Transverse colon (tissue), 4 donors: ENCODE measurements at regions of chr1 and their contacts with region 1.

Region 1: GRCh38 chr1:29230553-29231378 is at the start of gene MECR:
- DNase-seq: peak; percentile 95
- H3K4me3 ChIP-seq: peak within 1 kb of the TSS; percentile 63 to 89 (median 82)
- H3K27ac ChIP-seq: peak within 1 kb of the TSS; percentile 63 to 88 (median 80)
- H3K4me1 ChIP-seq: peaks cover 4 to 17% (median 13%) of the 10 kb centered on the region in 4 donors
- H3K27me3 ChIP-seq: peaks cover 7% of the 10 kb centered on the region
- CTCF ChIP-seq: peak in 3 of 5 experiments; percentile 5 to 44 (median 7)
- EP300 ChIP-seq: no peak
- POLR2A ChIP-seq: peak; percentile 75
- total RNA-seq, gene MECR: 5.2 to 16.0 (median 12.2) TPM in 3 of 4 donors, not detected in the other

Region 2: DNA sequence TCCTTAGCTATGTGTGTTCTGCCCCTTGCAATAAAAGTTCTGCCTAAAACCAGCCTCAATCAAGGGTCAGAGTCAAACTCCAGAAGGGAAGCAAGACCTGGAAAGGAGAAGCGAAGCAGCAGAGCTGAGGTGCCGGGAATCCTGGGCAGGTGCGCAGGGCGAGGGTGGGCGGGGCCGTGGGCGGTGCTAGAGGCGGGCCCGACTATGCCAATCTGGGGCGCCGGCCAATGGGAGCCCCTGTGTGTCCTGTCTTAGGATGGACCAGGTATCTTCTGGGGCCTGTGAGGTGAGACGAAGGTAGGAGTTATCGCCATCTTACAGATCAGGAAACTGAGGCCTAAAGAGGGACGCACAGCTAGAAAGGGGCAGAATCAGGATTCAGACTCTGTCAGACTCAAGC is 125.9 kb after region 1 on chr1:
- in situ Hi-C with region 1: no loop called
- intact Hi-C with region 1: no loop called
- DNase-seq: peak; percentile 21
- H3K4me3 ChIP-seq: no peak overlapping the region
- H3K27ac ChIP-seq: no peak overlapping the region
- H3K4me1 ChIP-seq: no peaks in the 10 kb centered on the region
- H3K27me3 ChIP-seq: peaks cover 18% of the 10 kb centered on the region
- CTCF ChIP-seq: no peak
- EP300 ChIP-seq: no peak
- POLR2A ChIP-seq: no peak

Region 3: DNA sequence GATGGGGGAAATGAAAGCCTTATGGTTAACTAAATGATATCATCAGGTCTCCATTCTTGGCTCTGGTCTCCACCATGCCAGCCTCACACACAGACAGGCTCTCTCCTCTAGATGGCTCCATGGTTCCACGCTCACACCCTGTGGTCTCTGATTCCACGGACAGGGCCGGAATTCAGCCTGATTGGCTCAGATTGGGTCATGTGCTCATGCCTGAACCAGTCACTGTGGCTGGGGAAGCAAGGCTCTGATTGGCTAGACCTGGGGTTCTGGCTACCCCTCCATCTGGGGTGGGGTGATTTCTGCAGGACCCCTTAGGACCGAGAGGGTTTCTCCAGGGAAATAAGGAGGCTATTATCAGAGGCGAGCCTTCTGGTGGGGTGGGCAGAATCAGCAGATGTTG is 282.6 kb after region 1 on chr1:
- in situ Hi-C with region 1: no loop called
- intact Hi-C with region 1: no loop called
- DNase-seq: no peak
- H3K4me3 ChIP-seq: no peak overlapping the region
- H3K27ac ChIP-seq: no peak overlapping the region
- H3K4me1 ChIP-seq: no peaks in the 10 kb centered on the region
- H3K27me3 ChIP-seq: peaks cover 14% of the 10 kb centered on the region
- CTCF ChIP-seq: peak in 1 of 5 experiments; percentile 8
- EP300 ChIP-seq: no peak
- POLR2A ChIP-seq: no peak

Region 4: DNA sequence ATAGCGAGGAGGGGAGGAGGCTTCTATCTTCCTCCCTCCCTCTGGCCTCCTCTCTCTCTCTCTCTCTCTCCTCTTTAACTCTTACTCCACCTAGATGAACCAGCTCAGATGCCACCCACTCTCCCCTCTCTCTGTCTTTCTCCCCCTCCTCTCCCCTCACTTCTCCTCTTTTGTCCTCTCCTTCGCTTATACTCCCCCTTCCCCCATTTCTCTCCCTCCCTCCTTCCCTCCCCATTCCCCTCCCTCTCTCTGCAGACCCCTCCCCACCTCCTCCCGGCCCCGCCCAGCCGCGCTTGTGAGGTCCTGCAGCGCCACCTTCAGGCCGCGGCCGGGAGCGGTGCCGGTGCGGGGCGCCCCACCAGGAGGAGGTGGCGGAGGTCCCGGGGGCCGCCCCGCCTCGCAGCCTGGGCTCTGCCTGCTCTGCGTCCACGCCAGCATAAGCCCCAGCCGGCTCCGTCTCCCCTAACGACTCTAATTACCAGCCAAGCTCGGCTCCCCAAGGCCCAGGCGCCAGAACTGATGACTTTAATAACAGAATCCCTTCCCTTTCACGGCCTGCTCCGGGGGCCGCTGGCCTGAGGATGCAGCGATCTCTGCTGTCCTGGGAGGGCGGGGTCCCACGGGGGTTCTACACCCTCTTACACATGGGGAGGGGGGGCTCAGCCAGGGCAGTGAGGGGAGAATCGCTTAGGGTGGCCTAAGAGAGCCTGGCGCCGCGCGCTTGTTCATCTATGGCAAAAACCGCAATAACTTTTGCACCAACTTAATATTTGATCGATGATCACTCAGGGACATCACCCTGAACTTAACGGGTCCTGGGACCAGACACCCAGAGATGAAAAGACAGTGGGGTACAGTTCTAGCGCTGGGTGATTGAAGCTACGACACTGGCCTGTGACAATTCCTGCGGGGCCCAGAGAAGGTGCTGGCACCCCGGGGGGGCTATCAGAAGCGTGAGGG is 855.3 kb after region 1 on chr1:
- in situ Hi-C with region 1: loop called in 3 of 4 experiments (anchors 25 kb)
- intact Hi-C with region 1: no loop called
- DNase-seq: peak; percentile 41
- H3K4me3 ChIP-seq: no peak overlapping the region
- H3K27ac ChIP-seq: no peak overlapping the region
- H3K4me1 ChIP-seq: peaks cover 11 to 41% (median 19%) of the 10 kb centered on the region in 4 donors
- H3K27me3 ChIP-seq: no peaks in the 10 kb centered on the region
- CTCF ChIP-seq: peak; percentile 59 to 78 (median 73)
- EP300 ChIP-seq: no peak
- POLR2A ChIP-seq: no peak

Region 5: GRCh38 chr1:30684881-30685795 is 1454.4 kb after region 1 on chr1:
- in situ Hi-C with region 1: loop called in 1 of 4 experiments (anchors 25 kb)
- intact Hi-C with region 1: no loop called
- DNase-seq: peak; percentile 78
- H3K4me3 ChIP-seq: peak overlapping the region in 2 of 4 donors; percentile 12 to 17
- H3K27ac ChIP-seq: peak overlapping the region in 1 of 4 donors; percentile 35
- H3K4me1 ChIP-seq: peaks cover 4 to 8% (median 6%) of the 10 kb centered on the region in 4 donors
- H3K27me3 ChIP-seq: peaks cover 48% of the 10 kb centered on the region
- CTCF ChIP-seq: peak in 1 of 5 experiments; percentile 6
- EP300 ChIP-seq: no peak
- POLR2A ChIP-seq: no peak

Region 6: GRCh38 chr1:30718636-30719405 is 1488.1 kb after region 1 on chr1:
- in situ Hi-C with region 1: loop called in 3 of 4 experiments (anchors 10 to 25 kb)
- intact Hi-C with region 1: no loop called
- DNase-seq: peak; percentile 85
- H3K4me3 ChIP-seq: peak overlapping the region; percentile 25 to 57 (median 44)
- H3K27ac ChIP-seq: peak overlapping the region; percentile 94 to 99 (median 98)
- H3K4me1 ChIP-seq: peaks cover 5 to 15% (median 10%) of the 10 kb centered on the region in 4 donors
- H3K27me3 ChIP-seq: no peaks in the 10 kb centered on the region
- CTCF ChIP-seq: peak; percentile 99 to 100 (median 99)
- EP300 ChIP-seq: peak; percentile 53
- POLR2A ChIP-seq: peak; percentile 93